Activated T-helper 1 cell treated with anti-CD3 and anti-CD28 coated beads, Interleukin-12 subunit alpha, Interleukin-12 subunit beta, Interleukin-2, Interleukin-4 antibody, amounts not matched to agents 30 ng/mL and 10 ng/mL and 1 ng/mL, durations not matched to agents 14 hours and 24 hours and 36 hours (primary cell): ENCODE measurements at regions of chr15 and their contacts with region 1.

Region 1: DNA sequence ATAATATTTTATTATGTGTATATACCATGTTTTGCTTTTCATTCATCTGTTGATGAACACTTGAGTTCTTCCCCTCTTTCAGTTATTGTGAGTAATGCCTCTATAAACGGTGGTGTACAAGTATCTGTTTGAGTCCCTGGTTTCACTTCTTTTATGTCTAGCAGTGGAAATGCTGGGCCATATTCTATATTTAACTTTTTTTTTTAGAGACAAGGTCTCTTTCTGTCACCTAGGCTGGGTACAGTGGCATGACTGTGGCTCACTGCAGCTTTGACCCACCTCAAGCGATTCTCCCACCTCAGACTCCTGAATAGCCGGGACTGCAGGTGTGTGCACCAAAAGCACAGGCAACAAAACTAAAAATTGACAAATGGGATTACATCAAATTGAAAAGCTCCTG is 19.9 kb downstream of the GOLM2 start:
- DNase-seq: no peak
- H3K4me3 Mint-ChIP-seq: peak overlapping the region; percentile 69
- H3K27ac Mint-ChIP-seq: peak overlapping the region; percentile 93
- H3K4me1 Mint-ChIP-seq: peaks cover 43% of the 10 kb centered on the region
- H3K27me3 Mint-ChIP-seq: no peaks in the 10 kb centered on the region

Region 2: GRCh38 chr15:44173813-44174212 is 134.6 kb before region 1 on chr15:
- intact Hi-C with region 1: no loop called
- DNase-seq: no peak
- H3K4me3 Mint-ChIP-seq: no peak overlapping the region
- H3K27ac Mint-ChIP-seq: no peak overlapping the region
- H3K4me1 Mint-ChIP-seq: no peaks in the 10 kb centered on the region
- H3K27me3 Mint-ChIP-seq: peaks cover 27% of the 10 kb centered on the region

Region 3: DNA sequence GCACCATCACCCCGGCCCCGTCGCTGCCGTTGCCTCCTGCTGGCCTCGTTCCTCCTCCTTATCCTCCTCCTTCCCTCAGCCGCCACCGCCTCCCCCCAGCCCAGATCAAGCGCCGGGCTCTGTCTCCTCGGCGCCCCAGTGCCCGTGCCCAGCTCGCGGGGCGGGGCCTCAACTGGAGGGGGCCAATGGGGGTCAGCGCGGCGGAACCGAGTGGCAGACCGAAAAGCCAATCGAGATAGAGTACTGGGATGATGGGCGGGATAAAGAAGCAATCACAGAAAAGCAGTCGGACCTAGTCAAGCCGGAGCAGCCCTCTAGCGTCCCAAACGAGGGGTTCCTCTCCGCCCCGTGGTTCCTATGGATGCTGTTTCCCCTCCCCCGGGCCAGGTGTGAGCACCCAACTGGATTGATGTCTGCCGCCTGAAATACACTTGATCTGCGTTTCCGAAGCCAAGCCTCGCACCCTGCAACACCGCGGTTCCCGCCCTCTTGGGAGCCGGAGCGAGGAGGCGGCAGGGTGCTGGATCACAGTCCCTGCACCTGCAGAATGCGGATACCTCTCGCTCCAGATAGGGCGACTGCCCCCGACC is 113.2 kb before region 1 on chr15 and contains the start of gene FRMD5:
- intact Hi-C with region 1: loop called (anchors 1 kb)
- DNase-seq: peak; percentile 76
- H3K4me3 Mint-ChIP-seq: peak within 1 kb of the TSS; percentile 86
- H3K27ac Mint-ChIP-seq: no peak within 1 kb of the TSS
- H3K4me1 Mint-ChIP-seq: peaks cover 20% of the 10 kb centered on the region
- H3K27me3 Mint-ChIP-seq: peaks cover 57% of the 10 kb centered on the region
- total RNA-seq, gene FRMD5: not detected in 2 replicates

Region 4: DNA sequence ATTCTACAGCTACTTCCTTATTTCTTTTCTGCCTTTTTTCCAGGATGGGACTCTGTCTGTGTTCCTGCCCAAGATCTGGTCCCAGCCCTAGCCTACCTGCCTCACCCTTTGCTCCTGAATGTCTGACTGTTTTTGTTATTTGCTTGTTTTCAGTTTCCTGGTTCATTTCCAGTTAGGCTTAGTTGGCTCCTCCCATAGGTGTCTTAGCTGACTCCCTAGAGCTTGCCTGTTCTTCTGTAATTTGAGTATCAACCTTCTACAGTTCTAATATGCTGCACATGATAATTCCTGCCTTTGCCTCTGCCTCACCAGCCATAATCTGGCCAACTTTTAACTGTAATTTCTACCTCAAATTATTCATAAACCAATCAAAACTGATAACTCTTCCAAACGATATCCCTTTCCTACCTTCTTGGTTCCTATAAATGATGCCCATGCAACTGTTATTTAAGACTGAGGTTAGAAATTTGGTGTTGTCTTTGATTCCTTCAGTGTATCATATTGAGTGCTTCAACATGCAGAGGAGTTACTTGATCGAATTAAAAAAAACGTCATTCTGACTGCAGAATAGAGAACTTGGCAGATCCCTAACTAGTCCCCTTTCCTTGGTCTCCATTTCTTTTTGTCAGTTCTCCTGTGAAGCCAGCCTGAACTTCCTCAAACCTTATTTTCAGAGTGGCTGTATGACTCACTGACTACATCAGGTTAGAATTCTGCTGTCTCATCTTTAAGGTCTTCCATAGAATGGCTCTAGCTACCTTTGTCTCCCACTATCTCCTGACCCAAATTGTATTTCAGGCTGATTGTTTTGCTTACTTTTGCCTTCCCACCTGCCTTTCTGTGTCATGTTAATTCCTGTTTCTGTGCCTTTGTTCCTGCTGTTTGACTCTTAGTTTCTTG is 11.5 kb before region 1 on chr15:
- intact Hi-C with region 1: loop called (anchors 1 kb)
- DNase-seq: no peak
- H3K4me3 Mint-ChIP-seq: peak overlapping the region; percentile 51
- H3K27ac Mint-ChIP-seq: peak overlapping the region; percentile 49
- H3K4me1 Mint-ChIP-seq: peaks cover 37% of the 10 kb centered on the region
- H3K27me3 Mint-ChIP-seq: no peaks in the 10 kb centered on the region

Region 5: DNA sequence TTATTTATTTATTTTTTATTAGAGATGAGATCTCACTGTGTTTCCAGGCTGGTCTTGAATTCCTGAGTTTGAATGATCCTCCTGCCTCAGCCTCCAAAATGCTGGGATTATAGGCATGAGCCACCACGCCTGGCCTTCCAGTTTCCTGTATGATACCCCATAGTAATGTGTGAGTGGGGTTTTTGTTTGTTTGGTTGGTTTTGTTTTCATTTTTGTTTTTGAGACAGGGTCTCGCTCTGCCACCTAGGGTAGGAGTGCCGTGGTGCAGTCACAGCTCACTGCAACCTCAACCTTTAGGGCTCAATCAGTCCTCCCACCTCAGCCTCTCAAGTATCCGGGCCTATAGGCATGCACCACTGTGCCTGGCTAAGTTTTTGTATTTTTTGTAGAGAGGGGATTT is 11.0 kb after region 1 on chr15:
- intact Hi-C with region 1: no loop called
- DNase-seq: no peak
- H3K4me3 Mint-ChIP-seq: no peak overlapping the region
- H3K27ac Mint-ChIP-seq: no peak overlapping the region
- H3K4me1 Mint-ChIP-seq: no peaks in the 10 kb centered on the region
- H3K27me3 Mint-ChIP-seq: no peaks in the 10 kb centered on the region

Region 6: DNA sequence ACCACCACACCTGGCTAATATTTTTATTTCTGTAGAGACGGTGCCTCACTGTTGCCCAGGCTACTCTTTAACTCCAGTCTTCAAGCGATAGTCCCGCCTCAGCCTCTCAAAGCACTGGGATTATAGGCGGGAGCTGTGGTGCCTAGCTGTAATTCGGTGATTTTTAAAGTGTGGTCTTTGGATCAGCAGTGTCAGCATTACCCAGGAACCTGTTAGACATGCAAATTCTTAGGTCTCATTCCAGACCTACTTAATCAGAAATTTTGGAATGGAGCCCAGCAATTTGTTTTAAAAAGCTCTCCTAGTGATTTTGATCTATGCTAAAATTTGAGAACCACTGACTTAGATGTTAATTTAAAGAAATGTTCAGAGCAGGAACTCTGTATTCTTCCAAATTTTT is 32.0 kb after region 1 on chr15:
- intact Hi-C with region 1: no loop called
- DNase-seq: no peak
- H3K4me3 Mint-ChIP-seq: no peak overlapping the region
- H3K27ac Mint-ChIP-seq: no peak overlapping the region
- H3K4me1 Mint-ChIP-seq: no peaks in the 10 kb centered on the region
- H3K27me3 Mint-ChIP-seq: no peaks in the 10 kb centered on the region

Region 7: GRCh38 chr15:44489464-44489863 is 181.0 kb after region 1 on chr15:
- intact Hi-C with region 1: loop called (anchors 2 kb)
- DNase-seq: no peak
- H3K4me3 Mint-ChIP-seq: no peak overlapping the region
- H3K27ac Mint-ChIP-seq: peak overlapping the region; percentile 20
- H3K4me1 Mint-ChIP-seq: peaks cover 14% of the 10 kb centered on the region
- H3K27me3 Mint-ChIP-seq: no peaks in the 10 kb centered on the region

Region 8: GRCh38 chr15:44536962-44537734 is 228.7 kb after region 1 on chr15 and contains the start of gene EIF3J:
- intact Hi-C with region 1: loop called (anchors 1 kb)
- DNase-seq: peak; percentile 95
- H3K4me3 Mint-ChIP-seq: peak within 1 kb of the TSS; percentile 93
- H3K27ac Mint-ChIP-seq: peak within 1 kb of the TSS; percentile 98
- H3K4me1 Mint-ChIP-seq: peaks cover 52% of the 10 kb centered on the region
- H3K27me3 Mint-ChIP-seq: no peaks in the 10 kb centered on the region
- total RNA-seq, gene EIF3J: 163 and 168 TPM in 2 replicates

Region 9: GRCh38 chr15:44728576-44729407 is 420.4 kb after region 1 on chr15:
- intact Hi-C with region 1: loop called (anchors 2 kb)
- DNase-seq: peak; percentile 96
- H3K4me3 Mint-ChIP-seq: peak overlapping the region; percentile 100
- H3K27ac Mint-ChIP-seq: peak overlapping the region; percentile 99
- H3K4me1 Mint-ChIP-seq: peaks cover 77% of the 10 kb centered on the region
- H3K27me3 Mint-ChIP-seq: no peaks in the 10 kb centered on the region